ENCODE measurements at regions of chr14 and their contacts with region 1.

Region 1: DNA sequence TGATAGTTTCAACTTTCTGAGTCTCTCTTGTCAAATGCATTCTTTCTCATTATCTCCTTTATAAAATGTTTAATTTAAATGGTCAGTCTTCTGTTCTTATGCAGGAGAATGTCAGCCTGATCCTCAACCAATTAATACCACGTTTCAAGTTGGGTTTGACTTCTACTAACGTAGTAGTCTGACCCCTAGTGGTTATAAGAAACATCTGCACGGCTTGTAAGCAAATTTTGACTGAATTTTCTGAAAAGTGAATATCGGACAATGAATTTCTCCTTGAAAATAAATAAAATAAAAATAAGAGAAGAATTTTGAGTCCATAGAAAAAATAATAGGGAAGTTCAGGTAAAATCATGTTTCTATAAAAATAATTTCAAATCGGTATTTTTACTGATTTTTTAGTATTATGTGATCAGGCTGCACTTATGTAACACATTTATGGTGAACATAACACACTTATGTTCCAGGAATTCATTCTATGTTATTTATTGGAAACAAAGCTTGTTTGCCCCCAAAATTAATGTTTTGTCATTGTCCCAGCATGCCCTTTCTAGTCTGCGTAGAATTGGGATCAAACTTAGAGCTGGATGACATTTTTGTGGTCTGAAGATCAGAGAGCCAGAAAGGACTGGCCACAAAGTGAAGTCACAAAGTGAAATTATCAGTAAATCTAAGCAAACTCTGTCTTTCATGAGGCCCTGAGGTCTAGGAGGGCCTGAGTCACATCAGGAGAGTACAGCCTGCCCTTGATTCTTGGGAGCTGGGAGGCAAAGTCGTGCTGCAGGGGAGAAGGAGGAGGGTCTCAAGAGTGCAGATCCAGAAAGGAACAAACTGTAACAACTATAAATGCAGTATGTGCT is 101.2 kb upstream of the STXBP6 start:
- DNase-seq: no peak
- H3K4me3 ChIP-seq: no peak overlapping the region
- H3K27ac ChIP-seq: no peak overlapping the region
- H3K4me1 ChIP-seq: no peaks in the 10 kb centered on the region
- H3K27me3 ChIP-seq: no peaks in the 10 kb centered on the region
- CTCF ChIP-seq: peak; percentile 26 to 75 (median 56)
- EP300 ChIP-seq: no peak
- POLR2A ChIP-seq: no peak

Region 2: GRCh38 chr14:24710403-24711112 is 440.6 kb before region 1 on chr14:
- intact Hi-C with region 1: loop called (anchors 5 kb)
- DNase-seq: no peak
- H3K4me3 ChIP-seq: no peak overlapping the region
- H3K27ac ChIP-seq: no peak overlapping the region
- H3K4me1 ChIP-seq: no peaks in the 10 kb centered on the region
- H3K27me3 ChIP-seq: no peaks in the 10 kb centered on the region
- CTCF ChIP-seq: peak in 2 of 4 experiments; percentile 31 to 67
- EP300 ChIP-seq: no peak
- POLR2A ChIP-seq: no peak

Region 3: GRCh38 chr14:24734878-24735500 is 416.2 kb before region 1 on chr14:
- intact Hi-C with region 1: loop called (anchors 5 kb)
- DNase-seq: no peak
- H3K4me3 ChIP-seq: no peak overlapping the region
- H3K27ac ChIP-seq: no peak overlapping the region
- H3K4me1 ChIP-seq: no peaks in the 10 kb centered on the region
- H3K27me3 ChIP-seq: no peaks in the 10 kb centered on the region
- CTCF ChIP-seq: peak in 3 of 4 experiments; percentile 39 to 68 (median 49)
- EP300 ChIP-seq: no peak
- POLR2A ChIP-seq: no peak

Region 4: GRCh38 chr14:24806061-24806678 is 345.0 kb before region 1 on chr14:
- intact Hi-C with region 1: loop called (anchors 5 kb)
- DNase-seq: peak; percentile 74
- H3K4me3 ChIP-seq: no peak overlapping the region
- H3K27ac ChIP-seq: peak overlapping the region in 1 of 4 donors; percentile 11
- H3K4me1 ChIP-seq: peaks cover 0 to 17% (median 2%) of the 10 kb centered on the region in 4 donors
- H3K27me3 ChIP-seq: no peaks in the 10 kb centered on the region
- CTCF ChIP-seq: peak; percentile 46 to 89 (median 78)
- EP300 ChIP-seq: no peak
- POLR2A ChIP-seq: no peak

Region 5: DNA sequence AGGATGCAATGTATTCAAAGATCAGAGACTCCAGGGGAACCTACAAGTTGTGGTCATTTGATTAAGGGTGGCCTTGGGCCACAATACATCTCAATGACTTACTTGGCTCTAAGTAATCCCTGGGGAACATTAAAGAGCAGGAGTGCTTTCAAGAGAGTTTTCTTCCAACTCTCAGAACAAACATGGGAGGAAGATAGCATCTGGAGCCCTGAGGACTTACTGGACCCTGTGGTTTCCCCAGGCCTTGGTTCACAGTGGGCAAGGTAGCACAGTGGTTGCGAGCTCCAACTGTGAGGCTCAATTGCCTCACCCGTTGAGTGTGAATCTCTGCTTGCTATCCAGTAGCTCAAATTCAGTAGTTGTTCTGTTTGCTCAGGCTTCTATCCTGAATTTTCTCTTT is 133.6 kb before region 1 on chr14:
- intact Hi-C with region 1: no loop called
- DNase-seq: no peak
- H3K4me3 ChIP-seq: no peak overlapping the region
- H3K27ac ChIP-seq: no peak overlapping the region
- H3K4me1 ChIP-seq: no peaks in the 10 kb centered on the region
- H3K27me3 ChIP-seq: no peaks in the 10 kb centered on the region
- CTCF ChIP-seq: no peak
- EP300 ChIP-seq: no peak
- POLR2A ChIP-seq: no peak